ENCODE measurements at regions of chr12 and their contacts with region 1.

Region 1: DNA sequence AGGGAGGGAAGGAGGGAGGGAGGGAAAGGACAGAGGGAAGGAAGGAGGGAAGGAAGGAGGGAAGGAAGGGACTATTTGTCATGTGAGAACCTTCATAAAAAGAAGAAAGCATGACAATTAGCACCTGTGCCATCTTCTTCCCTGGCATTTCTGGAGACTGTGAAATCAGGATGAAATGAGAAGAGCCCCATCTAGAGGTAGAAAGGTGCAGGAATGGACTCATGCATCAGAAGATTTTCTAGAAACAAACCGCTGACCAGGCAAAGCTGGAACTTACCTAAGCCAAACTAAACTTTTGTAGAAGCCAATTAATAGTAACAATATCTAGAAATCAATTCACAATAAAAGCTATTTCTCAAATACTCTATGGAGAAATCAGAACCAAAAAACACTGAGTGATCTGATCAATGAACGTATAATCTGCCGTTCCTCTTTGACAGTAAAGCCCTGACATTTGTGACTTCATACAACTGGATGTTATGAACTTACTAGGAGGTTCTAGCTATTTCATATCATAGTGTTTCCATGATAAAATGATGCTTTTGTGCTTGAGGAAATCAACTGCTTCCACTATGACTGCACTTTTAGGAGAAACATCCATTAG is 24.4 kb upstream of the CRACR2A start:
- ATAC-seq: peak in 6 of 8 experiments; percentile 46 to 71 (median 61)
- H3K4me3 ChIP-seq: no peak overlapping the region
- H3K27ac ChIP-seq: no peak overlapping the region
- H3K4me1 ChIP-seq: no peaks in the 10 kb centered on the region

Region 2: GRCh38 chr12:3554371-3555115 is 222.8 kb before region 1 on chr12:
- in situ Hi-C with region 1: no loop called
- ATAC-seq: peak in 2 of 8 experiments; percentile 23 to 57
- H3K4me3 ChIP-seq: no peak overlapping the region
- H3K27ac ChIP-seq: no peak overlapping the region
- H3K4me1 ChIP-seq: peaks cover 17% of the 10 kb centered on the region in 2 donors

Region 3: DNA sequence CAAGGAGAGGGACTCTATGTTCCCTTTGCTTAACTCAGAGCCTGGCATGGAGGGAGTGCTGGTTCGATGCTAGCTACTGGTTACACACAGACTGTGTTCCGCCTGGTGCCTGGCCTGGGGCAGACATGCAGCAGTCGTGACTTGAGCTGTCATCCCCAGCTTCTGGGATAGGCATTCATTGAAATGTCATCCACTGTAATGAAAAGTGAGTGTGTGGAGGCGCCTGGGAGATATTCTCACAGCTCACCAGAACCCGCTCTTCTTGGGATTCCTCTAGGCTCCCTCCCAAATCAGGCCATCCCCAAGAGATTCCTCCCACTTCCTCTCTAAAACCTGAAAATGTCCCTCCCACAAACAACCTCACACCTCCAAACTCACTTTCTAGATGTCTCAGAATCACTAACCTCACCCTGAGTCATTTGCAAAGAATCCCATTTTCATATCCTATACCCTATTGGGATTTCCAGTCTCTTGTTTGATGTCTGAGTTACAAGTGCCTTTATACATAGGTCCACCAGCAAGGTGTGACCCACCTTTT is 107.2 kb before region 1 on chr12:
- in situ Hi-C with region 1: loop called in 1 of 9 experiments (anchors 10 kb)
- ATAC-seq: peak in 3 of 8 experiments; percentile 9 to 73 (median 18)
- H3K4me3 ChIP-seq: no peak overlapping the region
- H3K27ac ChIP-seq: no peak overlapping the region
- H3K4me1 ChIP-seq: peaks cover 22 to 30% of the 10 kb centered on the region in 2 donors

Region 4: GRCh38 chr12:3872800-3873636 is 95.7 kb after region 1 on chr12 and contains the start of gene PARP11:
- in situ Hi-C with region 1: no loop called
- ATAC-seq: peak; percentile 96 to 99 (median 98)
- H3K4me3 ChIP-seq: peak within 1 kb of the TSS; percentile 62 to 85 (median 76)
- H3K27ac ChIP-seq: peak within 1 kb of the TSS; percentile 97 to 99
- H3K4me1 ChIP-seq: peaks cover 10 to 13% of the 10 kb centered on the region in 2 donors
- total RNA-seq, gene PARP11: 3.4 to 14.4 (median 10.2) TPM